ENCODE measurements at regions of chr3 and their contacts with region 1.

Region 1: GRCh38 chr3:32934150-32934742 is 17.2 kb upstream of the CCR4 start:
- DNase-seq: no peak
- ATAC-seq: no peak
- H3K4me3 ChIP-seq: no peak overlapping the region
- H3K27ac ChIP-seq: no peak overlapping the region
- H3K4me1 ChIP-seq: no peaks in the 10 kb centered on the region
- H3K27me3 ChIP-seq: no peaks in the 10 kb centered on the region
- CTCF ChIP-seq: peak; percentile 56

Region 2: DNA sequence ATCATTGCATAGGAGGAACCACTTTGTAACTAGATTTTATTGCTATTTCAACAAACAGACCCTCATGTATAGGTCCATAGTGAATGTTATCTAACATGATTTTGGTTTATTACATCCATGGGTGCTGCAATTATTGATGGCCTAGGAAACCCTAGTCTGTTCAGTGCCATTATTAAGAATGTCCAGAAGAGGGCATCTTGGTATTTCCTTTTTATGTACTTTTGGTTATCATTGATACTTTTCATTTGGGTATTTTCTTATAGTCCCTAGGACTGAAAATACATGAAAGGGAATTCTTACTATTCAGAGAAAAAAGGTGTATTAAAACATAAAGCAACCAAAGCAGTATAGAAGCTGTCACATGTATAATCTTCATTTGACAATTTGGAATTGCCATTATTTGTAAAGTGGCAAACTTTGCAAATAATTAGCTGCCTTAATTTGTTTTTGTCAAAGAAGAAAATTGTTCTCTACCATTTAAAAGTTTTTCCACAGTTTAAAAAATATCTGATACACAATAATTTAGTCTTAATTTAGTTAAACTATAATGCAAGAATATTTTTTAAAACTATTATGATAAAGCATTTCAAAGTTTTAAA is 200.5 kb before region 1 on chr3:
- intact Hi-C with region 1: loop called (anchors 10 kb)
- DNase-seq: no peak
- ATAC-seq: peak; percentile 39 to 44
- H3K4me3 ChIP-seq: no peak overlapping the region
- H3K27ac ChIP-seq: no peak overlapping the region
- H3K4me1 ChIP-seq: no peaks in the 10 kb centered on the region
- H3K27me3 ChIP-seq: no peaks in the 10 kb centered on the region
- CTCF ChIP-seq: peak; percentile 54

Region 3: GRCh38 chr3:32816439-32817256 is 117.6 kb before region 1 on chr3:
- intact Hi-C with region 1: no loop called
- DNase-seq: peak; percentile 59
- ATAC-seq: peak; percentile 7
- H3K4me3 ChIP-seq: peak overlapping the region; percentile 59
- H3K27ac ChIP-seq: no peak overlapping the region
- H3K4me1 ChIP-seq: peaks cover 16% of the 10 kb centered on the region
- H3K27me3 ChIP-seq: peaks cover 54% of the 10 kb centered on the region
- CTCF ChIP-seq: no peak

Region 4: GRCh38 chr3:33144433-33144832 is 210.2 kb after region 1 on chr3:
- intact Hi-C with region 1: no loop called
- DNase-seq: no peak
- ATAC-seq: no peak
- H3K4me3 ChIP-seq: no peak overlapping the region
- H3K27ac ChIP-seq: no peak overlapping the region
- H3K4me1 ChIP-seq: peaks cover 20% of the 10 kb centered on the region
- H3K27me3 ChIP-seq: no peaks in the 10 kb centered on the region
- CTCF ChIP-seq: peak; percentile 39